ENCODE measurements at regions of chr6 and their contacts with region 1.

Region 1: DNA sequence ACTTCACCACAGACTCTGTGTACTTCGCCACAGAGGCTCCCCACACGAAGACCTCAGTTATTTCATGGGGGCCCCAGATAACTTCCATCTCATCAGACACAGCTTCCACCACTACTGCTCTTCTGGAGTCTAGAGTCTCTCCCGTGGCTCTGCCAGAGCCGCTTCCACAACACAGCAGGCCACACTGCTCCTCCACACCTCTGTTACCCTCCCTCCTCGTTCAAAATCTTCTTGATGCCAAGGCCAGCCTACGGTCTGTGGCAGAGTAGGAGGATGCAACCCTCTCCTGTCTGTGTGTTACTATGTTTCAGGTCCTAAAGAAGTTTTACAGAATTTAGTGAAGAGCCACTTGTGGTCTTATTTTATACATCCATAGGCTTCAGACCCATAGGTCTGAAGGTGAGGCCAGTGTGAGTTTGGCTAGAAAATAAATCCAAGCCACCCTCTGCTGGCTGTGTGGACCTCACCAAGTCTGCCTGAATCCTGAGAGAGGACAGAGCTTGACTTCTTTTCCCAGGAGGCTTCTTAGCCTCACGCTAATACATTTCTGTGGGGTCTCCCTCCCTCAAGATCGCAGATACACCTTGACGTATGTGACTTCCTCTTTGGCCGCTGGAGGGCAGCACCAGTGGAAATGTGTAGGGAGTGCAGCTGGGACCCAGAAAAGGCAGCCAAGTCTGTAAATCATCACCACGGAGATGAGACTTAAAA is 197.7 kb downstream of the FAXC start:
- DNase-seq: peak; percentile 3
- H3K4me3 ChIP-seq: no peak overlapping the region
- H3K27ac ChIP-seq: no peak overlapping the region
- H3K27me3 ChIP-seq: no peaks in the 10 kb centered on the region
- CTCF ChIP-seq: peak; percentile 73

Region 2: DNA sequence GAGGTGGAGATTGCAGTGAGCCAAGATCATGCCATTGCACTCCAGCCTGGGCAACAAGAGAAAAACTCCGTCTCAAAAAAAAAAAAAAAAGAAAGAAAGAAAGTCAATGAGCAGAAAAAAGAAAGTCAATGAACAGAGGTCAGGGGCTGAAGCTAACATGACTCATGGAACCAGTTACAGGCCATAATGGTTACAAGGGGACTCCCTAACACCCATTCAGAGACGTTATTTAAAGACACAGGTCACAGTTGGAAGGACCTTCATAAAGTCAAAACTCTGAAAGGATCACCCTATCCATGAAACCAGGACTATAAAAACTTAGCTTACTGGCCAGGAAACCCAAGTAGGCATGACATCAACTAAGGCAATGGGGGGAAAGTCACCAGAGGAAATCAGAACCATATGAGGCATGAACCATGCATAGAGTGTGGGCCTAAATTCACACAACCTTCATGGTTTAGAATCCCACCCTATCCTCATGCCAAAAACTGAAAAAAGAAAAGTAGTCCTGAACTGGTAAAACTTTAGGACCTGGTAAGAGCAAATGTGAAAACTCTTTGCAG is 222.2 kb before region 1 on chr6:
- CTCF ChIA-PET with region 1: no interaction called
- POLR2A ChIA-PET with region 1: no interaction called
- DNase-seq: no peak
- H3K4me3 ChIP-seq: no peak overlapping the region
- H3K27ac ChIP-seq: no peak overlapping the region
- H3K27me3 ChIP-seq: no peaks in the 10 kb centered on the region
- CTCF ChIP-seq: no peak

Region 3: DNA sequence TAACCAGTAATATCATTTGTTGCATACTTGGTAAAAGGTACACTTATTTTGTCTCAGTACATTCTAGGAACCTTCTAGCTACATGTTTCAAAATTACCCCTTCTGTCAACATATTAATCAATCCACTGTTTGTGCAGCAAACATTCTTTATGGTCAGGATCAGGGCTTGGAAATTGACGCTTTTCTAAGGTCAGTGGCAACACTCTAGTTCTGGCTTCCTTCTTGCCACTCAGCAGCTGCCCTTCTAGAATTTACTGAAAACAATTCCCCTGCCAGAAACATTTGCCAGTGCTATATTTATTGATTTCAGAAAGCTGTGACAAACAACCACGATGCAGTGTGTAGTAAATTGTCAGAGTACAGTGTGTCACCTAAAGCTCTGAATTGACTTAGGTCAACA is 119.4 kb before region 1 on chr6:
- CTCF ChIA-PET with region 1: no interaction called
- POLR2A ChIA-PET with region 1: no interaction called
- DNase-seq: no peak
- H3K4me3 ChIP-seq: no peak overlapping the region
- H3K27ac ChIP-seq: no peak overlapping the region
- H3K27me3 ChIP-seq: no peaks in the 10 kb centered on the region
- CTCF ChIP-seq: no peak

Region 4: GRCh38 chr6:99241905-99242534 is 90.2 kb after region 1 on chr6:
- CTCF ChIA-PET with region 1: interaction called, 27 read pairs
- POLR2A ChIA-PET with region 1: no interaction called
- DNase-seq: peak; percentile 1
- H3K4me3 ChIP-seq: no peak overlapping the region
- H3K27ac ChIP-seq: no peak overlapping the region
- H3K27me3 ChIP-seq: no peaks in the 10 kb centered on the region
- CTCF ChIP-seq: peak; percentile 46; the same call in 1 of the 2 replicates